ENCODE measurements at regions of chr15 and their contacts with region 1.

Region 1: GRCh38 chr15:81000624-81001151 is at the start of gene TLNRD1:
- DNase-seq: peak; percentile 61 to 95 (median 89)

Region 2: DNA sequence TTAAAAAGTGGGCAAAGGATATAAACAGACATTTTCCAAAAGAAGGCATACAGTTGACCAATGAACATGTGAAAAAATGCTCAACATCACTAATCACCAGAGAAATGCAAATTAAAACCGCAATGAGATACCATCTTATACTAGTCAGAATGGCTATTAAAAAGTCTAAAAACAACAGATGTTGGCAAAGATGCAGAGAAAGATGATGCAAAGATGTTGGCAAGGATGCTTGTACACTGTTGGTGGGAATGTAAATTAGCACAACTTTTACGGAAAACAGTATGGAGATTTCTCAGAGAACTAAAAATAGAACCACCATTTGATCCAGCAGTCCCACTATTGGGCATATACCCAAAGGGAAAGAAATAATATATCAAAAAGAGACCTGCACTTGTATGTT is 53.5 kb after region 1 on chr15:
- intact Hi-C with region 1: loop called (anchors 10 kb)
- DNase-seq: no peak

Region 3: GRCh38 chr15:81098861-81099651 is 98.4 kb after region 1 on chr15:
- intact Hi-C with region 1: loop called (anchors 5 kb)
- DNase-seq: no peak

Measured in head of caudate nucleus (tissue), 42 donors.